HEK293 (cell line): ENCODE measurements at regions of chr5 and their contacts with region 1.

Region 1: DNA sequence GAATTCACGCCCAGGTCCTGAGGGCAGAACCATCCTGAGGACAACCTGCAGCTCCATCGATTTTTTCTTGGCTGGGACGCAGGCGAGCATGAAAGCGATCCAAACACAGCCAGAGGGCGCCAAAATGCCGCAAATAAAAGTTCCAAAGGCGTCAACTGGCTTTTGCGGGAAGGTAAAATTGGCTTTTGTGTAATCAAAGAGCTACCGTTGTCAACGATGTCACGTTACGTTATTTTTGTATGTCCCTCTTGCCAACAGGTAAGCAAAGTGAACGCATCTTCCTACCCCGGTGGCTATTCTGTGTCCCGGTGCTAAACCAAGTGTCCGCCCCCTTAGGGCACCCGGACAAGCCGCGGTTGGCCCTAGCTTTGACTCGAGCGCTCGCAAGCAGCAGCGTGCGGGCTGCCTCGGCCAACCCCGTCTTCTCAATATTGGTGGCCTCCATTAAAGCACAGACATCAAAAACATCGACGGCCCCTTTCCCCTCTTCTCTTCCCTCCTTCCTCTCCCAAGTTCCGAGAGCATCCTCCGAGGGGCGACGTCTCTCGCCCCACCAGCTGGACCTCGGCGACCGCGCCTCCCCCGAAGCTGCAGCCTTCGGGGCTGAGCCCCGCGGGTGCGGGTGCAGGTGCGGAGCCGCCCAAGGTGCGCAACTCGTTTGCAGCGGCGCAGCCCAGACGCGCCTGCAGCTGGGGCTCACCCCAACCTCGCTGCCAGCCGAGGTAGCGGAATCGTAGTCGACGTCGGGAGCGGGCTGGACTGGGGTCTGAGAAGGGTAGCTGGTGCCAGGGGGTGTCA is 1.1 kb upstream of the BASP1 start:
- H3K4me3 ChIP-seq: peak overlapping the region; percentile 31
- H3K27ac ChIP-seq: peak overlapping the region; percentile 90
- H3K4me1 ChIP-seq: peaks cover 18% of the 10 kb centered on the region
- CTCF ChIP-seq: peak; percentile 94

Region 2: GRCh38 chr5:17379100-17379951 is 163.0 kb after region 1 on chr5:
- CTCF ChIA-PET with region 1: interaction called, 16 read pairs
- POLR2A ChIA-PET with region 1: interaction called, 15 read pairs
- H3K4me3 ChIP-seq: no peak overlapping the region
- H3K27ac ChIP-seq: peak overlapping the region; percentile 70
- H3K4me1 ChIP-seq: peaks cover 40% of the 10 kb centered on the region
- CTCF ChIP-seq: no peak

Region 3: DNA sequence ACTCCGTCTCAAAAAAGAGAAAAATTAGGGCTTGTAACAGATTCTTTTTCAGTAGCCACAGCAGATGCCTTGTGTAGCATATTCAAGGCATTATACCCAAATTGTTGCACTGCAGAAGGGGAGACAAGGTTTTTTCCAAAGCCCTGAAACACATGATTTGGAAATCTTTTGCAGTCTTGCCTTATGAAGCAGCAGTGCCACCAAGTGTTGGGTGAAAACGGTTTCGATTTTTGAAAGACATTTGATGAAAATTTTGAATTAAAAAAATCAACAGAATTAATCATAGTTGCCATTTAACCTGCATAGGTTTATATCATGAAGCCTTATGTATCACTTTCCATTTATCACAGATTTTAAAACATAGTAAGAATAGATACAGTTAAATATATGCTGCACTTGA is 897.3 kb after region 1 on chr5:
- CTCF ChIA-PET with region 1: interaction called, 10 read pairs
- POLR2A ChIA-PET with region 1: no interaction called
- H3K4me3 ChIP-seq: no peak overlapping the region
- H3K27ac ChIP-seq: no peak overlapping the region
- H3K4me1 ChIP-seq: no peaks in the 10 kb centered on the region
- CTCF ChIP-seq: no peak

Region 4: DNA sequence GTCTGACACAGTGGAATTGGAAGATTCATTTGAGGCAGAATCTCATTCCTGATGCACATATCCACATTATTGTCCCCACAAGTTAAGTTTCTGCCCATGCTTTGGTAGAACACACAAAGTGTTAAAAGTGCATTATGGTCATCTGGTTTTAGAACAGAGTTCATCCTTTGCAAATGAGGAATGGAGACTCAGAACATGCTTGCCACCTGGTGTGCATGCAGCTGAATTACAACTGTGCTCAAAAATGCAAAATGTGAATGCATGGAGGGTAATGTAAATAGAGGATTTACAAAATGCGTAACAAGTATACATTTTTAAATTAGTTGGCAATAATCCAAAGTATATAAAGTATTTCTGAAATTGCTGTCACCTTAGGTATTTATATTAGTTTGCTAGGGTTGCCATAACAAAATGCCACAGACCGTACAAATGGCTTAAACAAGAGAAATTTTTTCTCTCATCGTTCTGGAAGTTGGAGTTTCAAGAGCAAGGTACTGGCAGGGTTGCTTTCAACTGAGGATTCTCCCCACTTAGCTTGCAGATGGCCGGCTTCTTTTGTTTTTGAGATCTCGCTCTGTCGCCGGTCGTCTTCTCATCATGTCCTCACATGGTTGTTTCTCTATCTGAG is 1089.0 kb after region 1 on chr5:
- CTCF ChIA-PET with region 1: interaction called, 80 read pairs
- POLR2A ChIA-PET with region 1: no interaction called
- H3K4me3 ChIP-seq: no peak overlapping the region
- H3K27ac ChIP-seq: no peak overlapping the region
- H3K4me1 ChIP-seq: no peaks in the 10 kb centered on the region
- CTCF ChIP-seq: peak; percentile 21; the same call in 1 of the 2 replicates